Right lobe of liver (tissue), 6 donors: ENCODE measurements at regions of chr7 and their contacts with region 1.

Region 1: DNA sequence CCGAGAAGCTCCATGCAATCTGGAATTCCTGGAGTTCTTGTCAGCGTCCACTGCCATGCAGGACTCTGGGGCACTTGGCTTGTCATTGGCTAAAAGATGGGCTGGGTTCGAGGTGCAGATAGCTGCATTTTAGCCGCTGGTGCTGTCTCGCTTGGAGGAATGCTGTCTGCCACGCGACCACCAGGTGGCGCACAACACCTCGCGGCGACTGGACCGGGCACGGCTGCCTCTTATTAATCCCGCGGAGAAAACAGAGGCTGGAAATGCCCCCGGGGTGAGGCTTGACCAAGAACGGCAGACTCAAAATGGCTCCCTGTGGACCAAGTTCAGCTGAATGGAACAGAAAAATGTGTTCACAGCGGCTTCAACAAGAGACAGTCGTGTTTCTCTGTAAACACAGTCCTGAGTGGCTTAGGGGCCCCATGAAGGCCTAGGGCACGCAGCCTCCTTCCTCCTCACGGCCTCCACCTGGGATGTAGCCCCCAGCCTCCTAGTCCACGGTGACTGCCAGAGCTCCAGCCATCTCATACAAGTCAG is 46.2 kb downstream of the AOC1 start:
- DNase-seq: peak; percentile 77 to 85 (median 79)
- ATAC-seq: peak; percentile 81 to 89 (median 84)
- H3K4me3 ChIP-seq: no peak overlapping the region
- H3K27ac ChIP-seq: no peak overlapping the region
- H3K4me1 ChIP-seq: peaks cover 0 to 11% (median 0%) of the 10 kb centered on the region in 4 donors
- H3K27me3 ChIP-seq: no peaks in the 10 kb centered on the region
- CTCF ChIP-seq: peak; percentile 88 to 97 (median 94)
- POLR2A ChIP-seq: no peak

Region 2: GRCh38 chr7:150988230-150989226 is 90.0 kb after region 1 on chr7:
- intact Hi-C with region 1: loop called in 1 of 2 experiments (anchors 10 kb)
- DNase-seq: peak; percentile 65 to 72 (median 68)
- ATAC-seq: peak; percentile 64 to 68 (median 66)
- H3K4me3 ChIP-seq: no peak overlapping the region
- H3K27ac ChIP-seq: peak overlapping the region in 2 of 3 donors; percentile 29 to 67
- H3K4me1 ChIP-seq: no peaks in the 10 kb centered on the region
- H3K27me3 ChIP-seq: no peaks in the 10 kb centered on the region
- CTCF ChIP-seq: peak; percentile 64 to 82 (median 80)
- POLR2A ChIP-seq: no peak